Calu3 (cell line): ENCODE measurements at regions of chr13 and their contacts with region 1.

Region 1: DNA sequence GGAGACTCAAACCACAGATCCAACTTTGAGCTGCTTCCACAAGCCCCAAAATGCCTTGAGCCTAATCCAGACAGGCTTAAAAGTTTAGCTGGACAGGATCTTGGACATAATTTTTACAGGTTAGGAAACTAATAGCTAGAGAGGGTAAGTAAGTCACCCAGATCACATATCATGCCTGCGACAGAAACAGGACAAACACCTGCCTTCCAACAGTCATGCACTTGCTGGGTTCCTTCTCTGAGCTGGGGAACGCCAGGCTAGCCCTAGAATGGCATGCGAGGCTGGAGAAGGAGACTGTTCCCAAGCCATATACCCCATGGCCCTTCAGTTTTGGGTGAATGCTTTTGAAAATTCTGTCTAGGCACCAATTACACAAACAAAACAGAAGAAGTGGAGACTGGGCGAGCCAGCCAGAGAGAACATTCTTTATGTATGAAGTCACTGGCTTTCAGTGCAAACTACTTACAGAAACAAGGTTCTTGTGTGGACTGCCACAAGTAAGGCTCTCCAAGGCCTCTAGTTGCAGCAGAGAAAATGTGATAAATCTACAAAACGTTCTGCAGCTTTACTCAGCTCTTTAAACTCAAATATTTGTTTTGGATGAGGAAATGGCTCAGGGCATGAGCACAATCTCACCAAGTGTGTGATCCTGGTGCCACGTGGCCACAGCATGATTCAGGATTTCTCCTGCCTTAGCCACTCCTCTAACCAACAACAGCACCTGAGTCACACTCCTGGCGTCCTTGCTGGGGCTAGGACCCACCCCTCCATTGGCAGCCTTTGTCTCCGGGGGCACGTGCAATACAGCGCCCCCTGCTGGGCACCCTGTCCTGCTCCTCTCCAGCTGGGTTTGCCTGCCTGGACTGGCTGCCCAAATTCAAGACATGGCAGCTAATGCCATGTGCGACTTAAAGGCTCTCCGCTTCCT is 73.4 kb upstream of the UBL3 start:
- DNase-seq: peak; percentile 89
- H3K4me3 Mint-ChIP-seq: peak overlapping the region; percentile 46
- H3K27ac Mint-ChIP-seq: peak overlapping the region; percentile 82
- H3K4me1 Mint-ChIP-seq: peaks cover 64% of the 10 kb centered on the region
- H3K27me3 Mint-ChIP-seq: no peaks in the 10 kb centered on the region
- CTCF ChIP-seq: peak; percentile 81

Region 2: DNA sequence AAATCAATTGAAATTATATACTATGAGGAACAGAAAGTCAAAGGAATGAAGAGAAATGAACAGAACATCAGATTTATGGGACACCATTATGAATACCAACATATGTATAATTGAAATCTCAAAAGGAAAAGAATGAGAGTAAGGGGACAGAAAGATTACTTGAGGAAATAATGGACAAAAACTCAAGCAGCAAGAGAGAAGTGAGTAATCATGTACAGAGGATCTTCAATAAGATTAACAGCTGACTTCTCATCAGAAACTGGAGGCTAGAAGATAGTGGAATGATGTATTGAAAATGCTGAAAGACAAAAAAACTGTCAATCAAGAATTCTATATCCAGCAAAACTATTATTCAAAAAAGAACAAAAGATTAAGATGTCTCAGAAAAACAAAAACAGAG is 1093.2 kb before region 1 on chr13:
- CTCF ChIA-PET with region 1: no interaction called
- intact Hi-C with region 1: no loop called
- DNase-seq: no peak
- H3K4me3 Mint-ChIP-seq: no peak overlapping the region
- H3K27ac Mint-ChIP-seq: no peak overlapping the region
- H3K4me1 Mint-ChIP-seq: no peaks in the 10 kb centered on the region
- H3K27me3 Mint-ChIP-seq: no peaks in the 10 kb centered on the region
- CTCF ChIP-seq: no peak

Region 3: GRCh38 chr13:29771247-29771646 is 152.6 kb before region 1 on chr13:
- CTCF ChIA-PET with region 1: interaction called, 8 read pairs
- intact Hi-C with region 1: loop called (anchors 5 kb)
- DNase-seq: no peak
- H3K4me3 Mint-ChIP-seq: no peak overlapping the region
- H3K27ac Mint-ChIP-seq: no peak overlapping the region
- H3K4me1 Mint-ChIP-seq: no peaks in the 10 kb centered on the region
- H3K27me3 Mint-ChIP-seq: no peaks in the 10 kb centered on the region
- CTCF ChIP-seq: no peak

Region 4: GRCh38 chr13:29850224-29850898 is 73.5 kb before region 1 on chr13 and contains the start of gene UBL3:
- CTCF ChIA-PET with region 1: interaction called, 11 read pairs
- intact Hi-C with region 1: loop called (anchors 1 kb)
- DNase-seq: peak; percentile 89
- H3K4me3 Mint-ChIP-seq: peak within 1 kb of the TSS; percentile 97
- H3K27ac Mint-ChIP-seq: peak within 1 kb of the TSS; percentile 94
- H3K4me1 Mint-ChIP-seq: no peaks in the 10 kb centered on the region
- H3K27me3 Mint-ChIP-seq: no peaks in the 10 kb centered on the region
- CTCF ChIP-seq: no peak
- total RNA-seq, gene UBL3: 13.8 and 15.9 TPM in 2 replicates

Region 5: DNA sequence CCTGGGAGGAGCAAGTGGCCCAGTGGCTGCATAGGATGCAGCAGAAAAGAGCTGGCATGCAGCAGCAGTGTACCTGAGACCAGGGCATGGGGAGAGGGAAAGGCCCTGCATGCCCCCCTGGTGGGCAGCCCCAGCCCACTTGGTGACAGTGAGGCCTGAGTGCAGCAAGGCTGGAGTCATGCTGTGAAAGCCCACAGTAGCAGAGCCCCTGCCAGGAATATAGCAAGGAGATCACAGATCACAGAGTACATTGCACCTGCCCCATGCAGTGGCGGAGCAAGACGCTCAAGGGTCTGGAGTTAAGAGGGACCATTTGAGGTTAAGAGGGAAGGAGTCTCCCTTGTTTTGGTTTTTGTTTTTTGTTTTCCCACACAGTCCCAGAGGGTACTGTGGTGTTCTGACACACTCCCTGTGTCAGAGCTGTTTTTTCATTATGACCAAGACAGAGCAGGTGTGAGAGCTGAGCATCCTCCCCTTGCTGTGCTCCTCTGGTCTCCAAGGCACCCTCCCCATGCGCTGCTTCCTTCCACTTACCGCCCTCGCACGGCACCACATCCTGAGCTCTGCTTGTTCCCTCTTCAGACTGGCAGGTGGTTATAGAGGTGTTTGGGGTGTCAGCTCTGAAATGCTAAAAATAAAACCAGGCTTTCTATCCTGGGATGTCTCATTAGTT is 11.6 kb after region 1 on chr13:
- CTCF ChIA-PET with region 1: interaction called, 10 read pairs
- intact Hi-C with region 1: no loop called
- DNase-seq: no peak
- H3K4me3 Mint-ChIP-seq: no peak overlapping the region
- H3K27ac Mint-ChIP-seq: no peak overlapping the region
- H3K4me1 Mint-ChIP-seq: peaks cover 16% of the 10 kb centered on the region
- H3K27me3 Mint-ChIP-seq: no peaks in the 10 kb centered on the region
- CTCF ChIP-seq: no peak

Region 6: GRCh38 chr13:30114571-30115256 is 190.9 kb after region 1 on chr13:
- CTCF ChIA-PET with region 1: interaction called, 8 read pairs
- intact Hi-C with region 1: loop called (anchors 2 kb)
- DNase-seq: peak; percentile 92
- H3K4me3 Mint-ChIP-seq: peak overlapping the region; percentile 73
- H3K27ac Mint-ChIP-seq: peak overlapping the region; percentile 66
- H3K4me1 Mint-ChIP-seq: peaks cover 27% of the 10 kb centered on the region
- H3K27me3 Mint-ChIP-seq: no peaks in the 10 kb centered on the region
- CTCF ChIP-seq: peak; percentile 84